K562 (cell line): ENCODE measurements at regions of chrX and their contacts with region 1.

Region 1: DNA sequence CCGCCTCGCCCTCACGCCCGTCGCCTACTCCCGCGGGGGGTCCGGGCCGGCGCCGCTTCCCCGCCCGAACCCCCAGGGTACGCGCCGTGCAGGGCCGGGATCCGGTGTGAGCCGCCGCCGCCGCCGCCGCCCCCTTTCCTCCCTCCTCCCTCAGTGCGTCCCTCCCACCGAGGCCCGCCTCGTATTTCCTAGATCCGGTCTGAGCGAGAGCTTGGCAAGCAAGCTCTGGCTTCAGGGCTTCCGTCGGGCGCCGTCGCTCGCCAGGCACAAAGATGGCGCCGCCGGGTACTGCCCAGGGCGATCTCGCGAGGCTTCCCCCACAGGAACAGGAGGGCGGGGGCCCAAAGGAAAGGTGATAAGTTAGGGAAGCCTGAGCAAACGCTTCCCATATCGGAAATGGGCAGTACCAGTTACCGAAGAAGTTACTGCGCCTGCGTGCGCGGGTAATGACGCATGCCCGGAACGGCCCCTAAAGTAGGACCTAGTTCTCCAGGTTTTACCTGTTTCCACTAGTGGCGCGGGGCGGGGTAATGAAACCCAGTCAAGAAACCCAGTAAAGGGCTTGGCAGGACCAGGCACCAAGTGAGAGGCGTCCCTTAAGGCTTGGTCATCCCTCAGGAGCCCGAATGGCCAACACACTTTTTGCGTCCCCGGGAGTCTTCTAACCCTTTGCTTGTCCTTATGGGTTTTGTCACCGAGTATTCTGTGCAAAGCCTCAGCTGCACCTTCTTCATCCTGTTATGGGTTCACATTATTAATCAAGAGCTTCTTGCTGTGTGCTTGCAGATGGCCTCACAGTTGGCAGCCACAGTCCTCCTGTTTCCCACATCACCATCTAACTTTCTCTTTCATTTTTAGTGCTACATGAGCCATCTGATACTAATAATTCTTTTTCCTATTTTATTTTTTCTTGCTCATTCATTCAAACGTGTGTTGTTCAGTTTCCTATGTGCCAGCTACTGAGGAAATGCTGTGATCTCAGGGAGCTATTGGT is at the start of gene TAB3:
- DNase-seq: peak; percentile 91 to 96 (median 94)
- ATAC-seq: peak; percentile 94
- H3K4me3 ChIP-seq: peak within 1 kb of the TSS; percentile 86
- H3K27ac ChIP-seq: peak within 1 kb of the TSS; percentile 81
- H3K4me1 ChIP-seq: peaks cover 5 to 26% of the 10 kb centered on the region in 2 experiments; a peak in 3 of 5 replicates
- H3K27me3 ChIP-seq: no peaks in the 10 kb centered on the region
- CTCF ChIP-seq: peak in 1 of 3 experiments; percentile 9; a peak in 1 of 6 replicates
- EP300 ChIP-seq: no peak
- POLR2A ChIP-seq: 0 out of 2 replicates have a peak, but pooled peaks have one; percentile 51
- RAD21 ChIP-seq: no peak
- polyA plus RNA-seq, gene TAB3: 2.4 to 3.5 TPM

Region 2: GRCh38 chrX:30652527-30653414 is 236.7 kb before region 1 on chrX:
- CTCF ChIA-PET with region 1: no interaction called
- POLR2A ChIA-PET with region 1: no interaction called
- in situ Hi-C with region 1: no loop called
- intact Hi-C with region 1: loop called (anchors 10 kb)
- DNase-seq: peak; percentile 94 to 96 (median 95)
- ATAC-seq: peak; percentile 92
- H3K4me3 ChIP-seq: peak overlapping the region; percentile 68
- H3K27ac ChIP-seq: peak overlapping the region; percentile 95
- H3K4me1 ChIP-seq: peaks cover 20 to 21% of the 10 kb centered on the region in 2 experiments; a peak in 4 of 5 replicates
- H3K27me3 ChIP-seq: no peaks in the 10 kb centered on the region
- CTCF ChIP-seq: no peak
- EP300 ChIP-seq: peak; percentile 12; the same call in 1 of the 2 replicates
- POLR2A ChIP-seq: peak; percentile 78
- RAD21 ChIP-seq: no peak

Region 3: DNA sequence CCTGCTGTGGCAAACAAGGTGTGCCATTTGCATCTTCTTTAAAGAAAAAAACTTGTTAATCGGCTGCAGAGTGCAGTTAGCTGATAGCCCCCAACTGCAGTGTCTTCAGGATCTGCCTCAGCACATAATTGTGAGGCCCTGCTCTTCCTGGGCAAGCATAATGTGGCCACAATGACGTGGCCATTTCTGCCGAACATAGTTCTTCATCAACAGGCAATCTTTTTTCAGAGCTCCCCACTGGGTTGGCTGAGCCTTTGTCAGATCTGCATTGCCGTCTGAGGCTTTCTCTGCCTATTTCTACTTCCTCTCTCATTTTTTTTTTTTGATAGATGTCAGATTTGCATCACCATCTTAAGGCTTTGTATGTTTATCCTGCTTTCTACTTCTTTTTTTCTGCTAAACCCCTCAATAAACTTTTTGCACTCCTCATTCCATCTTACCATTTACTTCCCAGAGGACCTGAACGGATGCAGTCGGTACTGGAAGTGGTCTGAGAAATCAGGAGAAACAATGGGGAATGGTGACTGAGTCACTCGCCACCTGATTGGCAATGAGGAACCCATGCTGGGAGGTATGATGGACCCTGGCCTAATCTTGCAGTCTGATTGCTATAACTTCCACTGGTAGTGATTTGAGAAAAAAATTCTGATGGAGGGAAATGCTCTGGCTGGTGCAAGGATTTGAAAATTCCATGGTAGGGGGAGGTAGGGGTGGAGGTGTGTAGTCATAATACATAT is 20.8 kb after region 1 on chrX:
- CTCF ChIA-PET with region 1: no interaction called
- POLR2A ChIA-PET with region 1: interaction called, 4 read pairs
- in situ Hi-C with region 1: no loop called
- intact Hi-C with region 1: loop called (anchors 2 kb)
- DNase-seq: peak; percentile 24 to 83 (median 52)
- ATAC-seq: peak; percentile 94
- H3K4me3 ChIP-seq: no peak overlapping the region
- H3K27ac ChIP-seq: peak overlapping the region; percentile 65; the same call in 2 of the 3 replicates
- H3K4me1 ChIP-seq: peaks cover 6 to 48% of the 10 kb centered on the region in 2 experiments; a peak in 4 of 5 replicates
- H3K27me3 ChIP-seq: no peaks in the 10 kb centered on the region
- CTCF ChIP-seq: no peak
- EP300 ChIP-seq: peak; percentile 63; the same call in 1 of the 2 replicates
- POLR2A ChIP-seq: no peak
- RAD21 ChIP-seq: no peak

Region 4: DNA sequence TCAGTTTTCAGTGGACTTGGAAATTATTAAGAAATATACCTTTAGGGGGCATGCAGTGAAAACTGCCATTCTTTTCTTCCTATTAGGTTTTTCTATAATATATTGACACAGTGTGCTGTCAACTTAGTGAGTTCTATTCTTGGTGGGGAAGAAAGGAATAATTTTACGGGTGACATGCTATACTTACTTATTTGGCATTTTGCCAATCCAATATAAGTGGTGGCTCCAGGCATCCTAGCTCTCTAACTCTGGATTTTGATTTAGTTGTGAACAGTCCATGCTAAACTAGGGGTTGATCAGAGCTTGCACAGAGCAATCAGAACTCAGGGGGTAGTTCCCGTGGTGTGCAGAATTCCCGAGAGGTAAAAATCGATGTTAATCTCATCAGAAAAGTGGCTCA is 460.1 kb after region 1 on chrX:
- CTCF ChIA-PET with region 1: no interaction called
- POLR2A ChIA-PET with region 1: no interaction called
- in situ Hi-C with region 1: no loop called
- intact Hi-C with region 1: no loop called
- DNase-seq: no peak
- ATAC-seq: no peak
- H3K4me3 ChIP-seq: no peak overlapping the region
- H3K27ac ChIP-seq: no peak overlapping the region
- H3K4me1 ChIP-seq: no peaks in the 10 kb centered on the region
- H3K27me3 ChIP-seq: no peaks in the 10 kb centered on the region
- CTCF ChIP-seq: no peak
- EP300 ChIP-seq: no peak
- POLR2A ChIP-seq: no peak
- RAD21 ChIP-seq: no peak